CD4-positive, alpha-beta T cell (primary cell): ENCODE measurements at regions of chr12 and their contacts with region 1.

Region 1: GRCh38 chr12:68807576-68808387 is at the start of gene MDM2:
- DNase-seq: peak; percentile 92 to 99 (median 96)
- ATAC-seq: peak; percentile 91
- H3K4me3 ChIP-seq: peak within 1 kb of the TSS; percentile 95
- H3K4me3 Mint-ChIP-seq: peak within 1 kb of the TSS; percentile 94
- H3K27ac ChIP-seq: peak within 1 kb of the TSS; percentile 92
- H3K27ac Mint-ChIP-seq: peak within 1 kb of the TSS; percentile 100
- H3K4me1 ChIP-seq: peaks cover 17% of the 10 kb centered on the region
- H3K4me1 Mint-ChIP-seq: peaks cover 34% of the 10 kb centered on the region
- H3K27me3 ChIP-seq: no peaks in the 10 kb centered on the region
- H3K27me3 Mint-ChIP-seq: no peaks in the 10 kb centered on the region
- CTCF ChIP-seq: peak; percentile 68
- total RNA-seq, gene MDM2: 90.8 TPM

Region 2: DNA sequence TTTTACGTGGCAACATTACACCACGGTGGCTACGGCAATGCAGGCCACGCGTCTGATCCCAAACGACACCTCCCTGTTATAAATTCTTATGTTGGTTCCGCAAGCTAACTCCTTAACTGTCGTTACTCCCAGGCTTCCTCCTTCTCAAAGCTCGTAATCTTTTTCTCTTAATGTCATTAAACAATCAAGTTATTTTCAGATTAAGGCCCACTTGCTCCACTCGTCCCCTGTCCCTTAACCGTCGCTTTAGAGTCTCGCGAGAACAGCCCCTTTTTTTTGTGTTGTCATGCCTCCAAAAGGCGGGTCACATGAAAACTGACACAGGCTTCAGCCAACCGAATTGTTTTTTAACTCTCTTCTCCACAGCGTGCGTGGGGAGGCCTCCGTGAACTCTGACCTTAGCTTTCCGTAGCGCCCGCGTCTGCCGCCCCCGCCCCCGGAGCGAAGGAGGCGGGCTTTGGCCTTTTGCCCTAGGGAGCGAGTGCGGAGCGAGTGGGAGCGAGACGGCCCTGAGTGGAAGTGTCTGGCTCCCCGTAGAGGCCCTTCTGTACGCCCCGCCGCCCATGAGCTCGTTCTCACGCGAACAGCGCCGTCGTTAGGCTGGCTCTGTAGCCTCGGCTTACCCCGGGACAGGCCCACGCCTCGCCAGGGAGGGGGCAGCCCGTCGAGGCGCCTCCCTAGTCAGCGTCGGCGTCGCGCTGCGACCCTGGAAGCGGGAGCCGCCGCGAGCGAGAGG is 1538.7 kb before region 1 on chr12 and contains the start of gene CAND1:
- CTCF ChIA-PET with region 1: no interaction called
- POLR2A ChIA-PET with region 1: interaction called, 26 read pairs
- intact Hi-C with region 1: no loop called
- DNase-seq: peak; percentile 90 to 99 (median 94)
- ATAC-seq: peak; percentile 77
- H3K4me3 ChIP-seq: peak within 1 kb of the TSS; percentile 91
- H3K4me3 Mint-ChIP-seq: peak within 1 kb of the TSS; percentile 94
- H3K27ac ChIP-seq: peak within 1 kb of the TSS; percentile 96 to 98
- H3K27ac Mint-ChIP-seq: peak within 1 kb of the TSS; percentile 97
- H3K4me1 ChIP-seq: peaks cover 24% of the 10 kb centered on the region
- H3K4me1 Mint-ChIP-seq: peaks cover 50% of the 10 kb centered on the region
- H3K27me3 ChIP-seq: no peaks in the 10 kb centered on the region
- H3K27me3 Mint-ChIP-seq: no peaks in the 10 kb centered on the region
- CTCF ChIP-seq: no peak
- total RNA-seq, gene CAND1: 118 to 124 TPM

Region 3: DNA sequence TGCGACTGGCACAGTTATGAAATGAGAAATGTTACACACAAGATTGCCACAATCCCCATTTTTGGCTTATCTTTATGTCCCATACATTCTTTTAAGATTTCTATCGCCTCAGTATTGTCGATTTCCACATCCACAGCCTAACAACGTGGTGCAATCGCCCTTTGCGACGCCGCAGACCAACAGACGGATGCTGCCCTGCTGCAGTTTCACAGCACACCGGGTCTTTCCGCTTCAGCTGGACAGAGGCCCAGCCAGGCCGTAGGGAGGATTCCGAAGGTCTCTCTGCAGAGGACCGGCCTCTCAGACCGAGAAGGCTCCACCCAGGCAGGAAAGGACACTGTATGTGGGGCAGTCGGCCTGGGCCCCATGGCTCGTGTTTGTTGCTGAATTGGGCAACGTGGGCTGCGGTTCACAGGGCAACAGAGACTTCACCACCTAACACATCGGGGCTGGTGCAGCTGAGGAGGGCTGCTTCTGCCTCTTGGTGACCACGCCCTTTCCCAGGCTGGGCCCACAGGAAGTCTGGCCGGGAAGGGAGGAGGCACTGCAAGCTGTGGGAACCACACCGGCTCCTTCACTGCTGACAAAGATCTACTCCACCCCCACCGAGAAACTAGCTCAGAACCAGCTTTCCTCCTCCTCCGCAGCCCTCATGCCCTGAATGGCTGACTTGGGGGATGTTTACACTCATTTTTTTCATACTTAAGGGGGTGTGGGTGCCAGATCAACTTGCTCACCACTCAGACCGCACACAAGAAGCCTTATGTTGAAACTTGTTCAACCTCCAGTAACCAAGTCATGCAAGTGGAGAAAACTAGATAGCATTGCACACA is 442.7 kb before region 1 on chr12:
- CTCF ChIA-PET with region 1: no interaction called
- POLR2A ChIA-PET with region 1: interaction called, 8 read pairs
- intact Hi-C with region 1: loop called in 1 of 2 experiments (anchors 5 kb)
- DNase-seq: peak; percentile 46 to 95 (median 74)
- ATAC-seq: peak; percentile 90
- H3K4me3 ChIP-seq: peak overlapping the region; percentile 49
- H3K4me3 Mint-ChIP-seq: peak overlapping the region; percentile 88
- H3K27ac ChIP-seq: peak overlapping the region; percentile 64 to 79
- H3K27ac Mint-ChIP-seq: peak overlapping the region; percentile 93
- H3K4me1 ChIP-seq: peaks cover 52% of the 10 kb centered on the region
- H3K4me1 Mint-ChIP-seq: peaks cover 75% of the 10 kb centered on the region
- H3K27me3 ChIP-seq: no peaks in the 10 kb centered on the region
- H3K27me3 Mint-ChIP-seq: no peaks in the 10 kb centered on the region
- CTCF ChIP-seq: no peak

Region 4: DNA sequence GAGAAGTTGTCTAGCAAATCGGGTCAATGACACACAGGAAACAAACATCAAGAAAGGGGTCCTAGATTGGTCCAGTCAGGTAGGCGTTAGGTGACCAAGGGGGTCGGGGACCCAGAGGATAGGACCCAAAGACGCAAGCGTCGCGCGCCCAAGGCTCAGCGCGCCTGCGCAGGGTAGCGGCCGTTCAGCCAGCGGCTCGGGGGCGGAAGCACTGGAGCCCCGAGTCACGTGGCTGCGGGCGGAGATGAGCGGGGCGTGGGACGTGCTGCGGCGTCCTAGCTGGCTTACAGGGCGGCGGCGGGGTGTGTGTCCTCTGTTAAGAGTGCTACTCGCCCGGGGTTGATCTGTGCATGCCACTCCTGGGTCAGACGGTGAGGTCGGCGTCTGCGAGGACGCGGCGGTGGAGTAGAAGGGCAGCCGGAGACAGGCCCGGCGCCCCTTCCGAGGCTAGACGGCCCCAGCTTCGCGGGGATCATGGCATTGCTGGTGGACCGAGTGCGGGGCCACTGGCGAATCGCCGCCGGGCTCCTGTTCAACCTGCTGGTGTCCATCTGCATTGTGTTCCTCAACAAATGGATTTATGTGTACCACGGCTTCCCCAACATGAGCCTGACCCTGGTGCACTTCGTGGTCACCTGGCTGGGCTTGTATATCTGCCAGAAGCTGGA is 61.7 kb before region 1 on chr12 and contains the start of gene SLC35E3:
- CTCF ChIA-PET with region 1: interaction called, 12 read pairs
- POLR2A ChIA-PET with region 1: interaction called, 74 read pairs
- intact Hi-C with region 1: loop called (anchors 2 kb)
- DNase-seq: peak; percentile 81 to 95 (median 88)
- ATAC-seq: peak; percentile 98
- H3K4me3 ChIP-seq: peak within 1 kb of the TSS; percentile 90
- H3K4me3 Mint-ChIP-seq: peak within 1 kb of the TSS; percentile 93
- H3K27ac ChIP-seq: peak within 1 kb of the TSS; percentile 22 to 73
- H3K27ac Mint-ChIP-seq: peak within 1 kb of the TSS; percentile 95
- H3K4me1 ChIP-seq: peaks cover 19% of the 10 kb centered on the region
- H3K4me1 Mint-ChIP-seq: peaks cover 47% of the 10 kb centered on the region
- H3K27me3 ChIP-seq: no peaks in the 10 kb centered on the region
- H3K27me3 Mint-ChIP-seq: no peaks in the 10 kb centered on the region
- CTCF ChIP-seq: no peak
- total RNA-seq, gene SLC35E3: 3.5 to 6.1 TPM

Region 5: GRCh38 chr12:68831272-68831671 is 23.5 kb after region 1 on chr12:
- CTCF ChIA-PET with region 1: interaction called, 20 read pairs
- POLR2A ChIA-PET with region 1: interaction called, 16 read pairs
- intact Hi-C with region 1: loop called (anchors 1 to 2 kb)
- DNase-seq: no peak
- ATAC-seq: no peak
- H3K4me3 ChIP-seq: no peak overlapping the region
- H3K4me3 Mint-ChIP-seq: no peak overlapping the region
- H3K27ac ChIP-seq: no peak overlapping the region
- H3K27ac Mint-ChIP-seq: no peak overlapping the region
- H3K4me1 ChIP-seq: no peaks in the 10 kb centered on the region
- H3K4me1 Mint-ChIP-seq: peaks cover 15% of the 10 kb centered on the region
- H3K27me3 ChIP-seq: no peaks in the 10 kb centered on the region
- H3K27me3 Mint-ChIP-seq: no peaks in the 10 kb centered on the region
- CTCF ChIP-seq: no peak

Region 6: DNA sequence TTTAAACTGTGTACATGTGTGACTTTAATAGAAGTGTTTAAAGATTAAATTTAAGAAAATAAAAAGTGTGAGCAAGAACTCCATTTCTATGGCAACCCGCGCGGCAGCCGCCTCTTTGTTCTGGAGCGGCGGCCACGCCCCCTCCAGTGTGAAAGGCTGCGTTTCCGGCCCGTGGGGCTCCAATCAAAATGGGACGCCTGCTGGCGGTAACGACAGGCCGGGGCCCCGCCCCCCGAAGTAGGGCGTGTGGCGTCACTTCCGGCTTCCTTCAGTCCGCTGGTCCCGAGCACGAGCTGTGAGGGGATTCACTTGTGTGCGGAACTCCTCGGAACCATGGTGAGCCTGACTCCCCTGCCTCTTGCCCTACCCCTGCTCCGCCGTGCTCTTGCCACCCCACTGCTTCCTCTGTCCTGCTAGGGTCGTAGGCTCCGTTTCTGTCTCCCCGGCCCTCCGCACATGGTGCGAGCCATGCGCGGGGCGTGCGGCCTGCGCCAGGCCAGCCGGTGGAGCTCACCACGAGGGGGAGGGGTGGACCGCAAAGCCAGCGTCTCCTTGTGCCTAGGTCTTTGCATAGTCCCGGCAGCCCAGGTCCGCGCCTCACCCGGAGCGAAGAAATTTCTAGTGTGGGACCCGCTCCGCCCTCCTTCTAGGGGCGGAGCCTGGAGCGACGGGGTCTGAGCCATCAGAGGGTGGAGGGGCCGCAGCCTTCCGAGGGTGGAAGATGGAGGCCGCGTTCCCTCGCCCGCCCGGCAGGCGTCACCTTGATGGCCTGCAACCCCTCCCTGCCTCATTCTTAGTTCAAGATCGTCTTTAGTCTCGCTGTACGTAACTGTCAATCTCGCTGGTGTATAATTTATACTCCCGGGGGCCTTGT is 777.6 kb after region 1 on chr12 and contains the start of gene CCT2:
- CTCF ChIA-PET with region 1: no interaction called
- POLR2A ChIA-PET with region 1: no interaction called
- intact Hi-C with region 1: loop called in 1 of 2 experiments (anchors 10 kb)
- DNase-seq: peak; percentile 92 to 99 (median 96)
- ATAC-seq: peak; percentile 87
- H3K4me3 ChIP-seq: peak within 1 kb of the TSS; percentile 98
- H3K4me3 Mint-ChIP-seq: peak within 1 kb of the TSS; percentile 99
- H3K27ac ChIP-seq: peak within 1 kb of the TSS; percentile 96 to 97
- H3K27ac Mint-ChIP-seq: peak within 1 kb of the TSS; percentile 98
- H3K4me1 ChIP-seq: peaks cover 12% of the 10 kb centered on the region
- H3K4me1 Mint-ChIP-seq: peaks cover 27% of the 10 kb centered on the region
- H3K27me3 ChIP-seq: no peaks in the 10 kb centered on the region
- H3K27me3 Mint-ChIP-seq: no peaks in the 10 kb centered on the region
- CTCF ChIP-seq: peak; percentile 28
- total RNA-seq, gene CCT2: 173 to 177 TPM

Region 7: DNA sequence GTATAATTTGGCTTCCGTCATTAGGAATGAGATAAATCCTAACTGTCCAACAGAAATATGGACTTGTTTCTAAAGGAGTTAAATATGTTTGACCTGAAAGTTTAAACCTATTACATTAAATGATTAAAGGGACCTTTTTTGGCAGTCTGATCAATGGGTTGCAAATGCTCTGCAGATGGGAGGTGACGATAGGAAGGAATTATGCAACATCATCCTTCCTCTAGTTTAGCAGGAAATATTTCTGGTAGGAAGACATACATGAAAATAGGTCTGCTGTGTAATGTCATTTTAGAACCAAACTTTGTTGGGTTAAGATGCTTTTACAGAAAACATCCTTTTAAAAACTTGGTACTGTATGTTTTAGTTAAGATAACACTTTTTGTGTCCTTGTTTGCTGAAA is 800.3 kb after region 1 on chr12:
- CTCF ChIA-PET with region 1: no interaction called
- POLR2A ChIA-PET with region 1: no interaction called
- intact Hi-C with region 1: no loop called
- DNase-seq: no peak
- ATAC-seq: no peak
- H3K4me3 ChIP-seq: no peak overlapping the region
- H3K4me3 Mint-ChIP-seq: no peak overlapping the region
- H3K27ac ChIP-seq: no peak overlapping the region
- H3K27ac Mint-ChIP-seq: no peak overlapping the region
- H3K4me1 ChIP-seq: no peaks in the 10 kb centered on the region
- H3K4me1 Mint-ChIP-seq: no peaks in the 10 kb centered on the region
- H3K27me3 ChIP-seq: no peaks in the 10 kb centered on the region
- H3K27me3 Mint-ChIP-seq: no peaks in the 10 kb centered on the region
- CTCF ChIP-seq: no peak